ENCODE measurements at regions of chr3 and their contacts with region 1.

Region 1: GRCh38 chr3:105366326-105367062 is at the start of gene ALCAM:
- DNase-seq: peak; percentile 99
- H3K4me3 Mint-ChIP-seq: peak within 1 kb of the TSS; percentile 100
- H3K27ac Mint-ChIP-seq: peak within 1 kb of the TSS; percentile 98
- H3K4me1 Mint-ChIP-seq: peaks cover 23% of the 10 kb centered on the region
- H3K27me3 Mint-ChIP-seq: no peaks in the 10 kb centered on the region
- CTCF ChIP-seq: peak; percentile 48
- total RNA-seq, gene ALCAM: 98.4 and 112 TPM in 2 replicates

Region 2: DNA sequence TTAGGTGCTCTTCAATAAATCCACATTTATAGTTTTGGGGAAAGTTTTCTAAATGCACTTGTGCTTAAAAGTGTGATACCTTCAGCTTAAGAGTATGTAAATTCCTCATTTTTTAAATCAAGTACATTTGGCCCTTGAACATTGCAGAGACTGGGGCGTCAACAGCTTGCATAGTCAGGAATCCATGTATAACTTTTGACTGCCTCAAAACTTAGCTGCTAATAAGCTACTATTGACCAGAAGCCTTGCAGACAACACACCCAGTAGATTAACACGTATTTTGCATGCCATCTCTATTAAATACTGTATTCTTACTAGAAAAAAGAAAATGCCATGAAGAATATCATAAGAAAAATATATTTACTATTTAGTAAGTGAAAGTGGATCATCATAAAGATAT is 1211.6 kb before region 1 on chr3:
- CTCF ChIA-PET with region 1: no interaction called
- POLR2A ChIA-PET with region 1: no interaction called
- intact Hi-C with region 1: no loop called
- DNase-seq: no peak
- H3K4me3 Mint-ChIP-seq: no peak overlapping the region
- H3K27ac Mint-ChIP-seq: no peak overlapping the region
- H3K4me1 Mint-ChIP-seq: no peaks in the 10 kb centered on the region
- H3K27me3 Mint-ChIP-seq: no peaks in the 10 kb centered on the region
- CTCF ChIP-seq: no peak

Region 3: DNA sequence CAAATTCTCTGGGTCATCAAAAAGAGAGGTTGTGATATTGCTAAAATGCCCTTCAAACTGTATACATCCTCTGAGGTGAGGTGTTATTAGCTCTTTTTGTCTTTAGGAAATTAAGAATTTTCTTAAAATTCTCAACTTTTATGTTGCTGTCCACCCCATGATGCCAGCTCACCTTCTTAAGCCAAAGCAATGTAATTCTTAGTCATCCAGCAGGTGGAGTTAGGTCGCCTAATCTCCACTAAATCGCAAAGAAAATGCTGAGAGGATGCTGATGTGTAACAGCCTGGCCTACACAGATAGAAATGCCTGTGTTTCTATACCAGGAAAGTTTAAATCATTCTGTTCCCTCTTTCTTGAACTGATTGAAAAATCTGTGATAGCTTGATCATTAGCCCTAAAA is 769.9 kb before region 1 on chr3:
- CTCF ChIA-PET with region 1: interaction called, 70 read pairs
- POLR2A ChIA-PET with region 1: interaction called, 11 read pairs
- intact Hi-C with region 1: loop called (anchors 1 kb)
- DNase-seq: peak; percentile 66
- H3K4me3 Mint-ChIP-seq: no peak overlapping the region
- H3K27ac Mint-ChIP-seq: no peak overlapping the region
- H3K4me1 Mint-ChIP-seq: no peaks in the 10 kb centered on the region
- H3K27me3 Mint-ChIP-seq: no peaks in the 10 kb centered on the region
- CTCF ChIP-seq: peak; percentile 59

Region 4: DNA sequence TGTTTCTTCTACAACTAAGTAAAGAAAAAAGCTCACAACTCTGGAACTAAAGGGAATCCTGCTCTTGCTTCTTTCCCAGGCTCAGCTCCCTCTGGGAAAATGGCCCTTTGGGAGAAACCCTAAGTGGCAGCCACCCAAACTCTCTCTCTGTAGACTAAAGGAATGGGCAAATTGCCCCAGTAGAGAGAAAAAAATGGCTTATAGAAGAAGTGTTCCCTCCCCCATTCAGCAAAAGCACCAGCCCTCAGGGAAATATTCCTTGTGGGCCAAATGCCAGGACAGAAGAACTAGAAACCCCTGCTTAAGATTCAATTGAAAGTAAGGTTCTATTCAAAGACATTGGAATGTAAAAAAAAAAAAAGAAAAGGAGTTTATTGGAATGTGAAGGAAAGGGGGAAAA is 603.5 kb before region 1 on chr3:
- CTCF ChIA-PET with region 1: no interaction called
- POLR2A ChIA-PET with region 1: no interaction called
- intact Hi-C with region 1: loop called (anchors 5 kb)
- DNase-seq: peak; percentile 36
- H3K4me3 Mint-ChIP-seq: no peak overlapping the region
- H3K27ac Mint-ChIP-seq: no peak overlapping the region
- H3K4me1 Mint-ChIP-seq: no peaks in the 10 kb centered on the region
- H3K27me3 Mint-ChIP-seq: no peaks in the 10 kb centered on the region
- CTCF ChIP-seq: no peak

Region 5: GRCh38 chr3:105083945-105084344 is 282.5 kb before region 1 on chr3:
- CTCF ChIA-PET with region 1: no interaction called
- POLR2A ChIA-PET with region 1: no interaction called
- intact Hi-C with region 1: loop called (anchors 10 kb)
- DNase-seq: no peak
- H3K4me3 Mint-ChIP-seq: no peak overlapping the region
- H3K27ac Mint-ChIP-seq: no peak overlapping the region
- H3K4me1 Mint-ChIP-seq: no peaks in the 10 kb centered on the region
- H3K27me3 Mint-ChIP-seq: no peaks in the 10 kb centered on the region
- CTCF ChIP-seq: no peak

Region 6: DNA sequence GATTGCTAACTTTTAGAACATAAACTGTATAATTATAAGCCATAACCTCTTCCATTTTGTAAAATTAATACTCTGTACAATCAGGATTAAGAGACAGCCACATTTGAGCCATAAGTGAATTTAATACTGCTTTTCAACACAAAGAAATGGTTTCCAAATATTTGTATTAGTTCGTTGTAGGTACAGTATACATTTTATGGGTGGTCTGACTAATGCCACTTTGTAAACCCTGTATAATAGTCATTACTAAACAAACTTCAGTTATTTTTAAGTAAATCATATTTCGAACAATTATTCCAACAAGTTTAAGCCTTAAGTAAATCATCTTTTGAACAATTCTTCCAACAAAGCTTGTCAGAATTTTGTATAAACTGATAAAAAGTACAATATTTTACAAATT is 11.2 kb after region 1 on chr3:
- CTCF ChIA-PET with region 1: interaction called, 4 read pairs
- POLR2A ChIA-PET with region 1: interaction called, 37 read pairs
- intact Hi-C with region 1: no loop called
- DNase-seq: no peak
- H3K4me3 Mint-ChIP-seq: no peak overlapping the region
- H3K27ac Mint-ChIP-seq: no peak overlapping the region
- H3K4me1 Mint-ChIP-seq: peaks cover 22% of the 10 kb centered on the region
- H3K27me3 Mint-ChIP-seq: no peaks in the 10 kb centered on the region
- CTCF ChIP-seq: no peak

Region 7: DNA sequence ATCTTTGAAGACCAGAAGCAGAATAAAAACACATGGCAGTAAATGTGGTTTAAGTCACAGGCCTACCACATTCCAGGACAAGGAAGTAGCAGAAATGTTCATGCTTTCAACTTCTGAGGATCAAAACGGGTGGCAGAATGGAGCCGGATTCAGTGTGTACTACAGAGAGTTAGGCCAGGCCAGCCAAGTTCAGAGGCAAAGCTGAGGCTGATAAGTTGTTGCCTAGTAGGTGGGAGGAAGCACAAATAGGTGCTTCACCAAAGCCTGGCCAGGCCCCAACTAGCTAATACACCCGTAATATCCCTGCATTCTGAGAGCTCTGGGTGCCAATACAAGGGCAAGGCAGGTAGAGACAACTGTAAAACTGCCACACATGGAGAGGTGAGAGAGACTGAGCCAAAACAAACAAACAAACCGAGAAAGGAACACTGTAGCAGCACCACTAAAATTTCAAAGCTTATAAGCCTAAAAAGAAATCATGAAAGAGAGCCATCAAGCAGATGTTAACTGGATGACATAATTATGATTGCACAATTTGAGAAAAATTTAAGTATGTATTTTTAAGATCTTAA is 658.7 kb after region 1 on chr3:
- CTCF ChIA-PET with region 1: no interaction called
- POLR2A ChIA-PET with region 1: no interaction called
- intact Hi-C with region 1: no loop called
- DNase-seq: peak; percentile 78
- H3K4me3 Mint-ChIP-seq: no peak overlapping the region
- H3K27ac Mint-ChIP-seq: peak overlapping the region; percentile 77
- H3K4me1 Mint-ChIP-seq: peaks cover 28% of the 10 kb centered on the region
- H3K27me3 Mint-ChIP-seq: no peaks in the 10 kb centered on the region
- CTCF ChIP-seq: no peak

Region 8: DNA sequence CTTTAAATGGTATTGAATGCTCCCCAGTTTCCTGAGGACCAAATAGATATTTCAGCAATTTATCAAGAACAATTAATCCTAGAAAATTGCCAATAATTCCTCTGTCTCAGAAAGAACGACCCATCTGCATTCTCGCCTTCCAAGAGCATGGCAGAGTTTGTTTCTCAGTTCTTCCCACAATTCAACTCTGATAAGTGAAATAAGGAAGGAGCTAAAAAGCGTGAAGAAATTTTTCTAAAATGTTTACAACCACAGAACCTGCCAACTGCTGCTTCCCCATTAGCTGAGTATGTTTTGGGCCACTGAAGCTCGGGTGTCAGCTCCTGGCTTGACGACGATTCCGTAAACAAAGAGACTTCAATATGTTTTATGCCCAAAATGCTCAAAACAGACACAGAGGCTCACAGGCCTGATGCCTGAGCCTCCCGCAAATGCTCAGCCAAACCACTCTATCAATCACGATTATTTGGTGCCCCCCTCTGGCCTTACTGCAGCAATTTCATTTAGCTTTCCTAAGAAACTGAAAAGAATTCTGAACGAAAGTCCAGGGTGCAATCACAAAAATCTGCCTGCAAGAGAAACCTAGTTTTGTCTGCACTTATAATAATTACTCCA is 1751.5 kb after region 1 on chr3:
- CTCF ChIA-PET with region 1: interaction called, 3 read pairs
- POLR2A ChIA-PET with region 1: no interaction called
- intact Hi-C with region 1: loop called (anchors 5 kb)
- DNase-seq: peak; percentile 65
- H3K4me3 Mint-ChIP-seq: no peak overlapping the region
- H3K27ac Mint-ChIP-seq: peak overlapping the region; percentile 12
- H3K4me1 Mint-ChIP-seq: no peaks in the 10 kb centered on the region
- H3K27me3 Mint-ChIP-seq: no peaks in the 10 kb centered on the region
- CTCF ChIP-seq: peak; percentile 55